ENCODE measurements at regions of chr12 and their contacts with region 1.

Region 1: GRCh38 chr12:98593351-98594049 is at the start of gene SLC25A3:
- DNase-seq: peak; percentile 96
- H3K4me3 Mint-ChIP-seq: peak within 1 kb of the TSS; percentile 84
- H3K27ac Mint-ChIP-seq: peak within 1 kb of the TSS; percentile 96
- H3K4me1 Mint-ChIP-seq: peaks cover 38% of the 10 kb centered on the region
- H3K27me3 Mint-ChIP-seq: no peaks in the 10 kb centered on the region
- total RNA-seq, gene SLC25A3: 333 to 355 TPM

Region 2: GRCh38 chr12:98572010-98572409 is 21.5 kb before region 1 on chr12:
- CTCF ChIA-PET with region 1: interaction called, 10 read pairs
- POLR2A ChIA-PET with region 1: no interaction called
- DNase-seq: no peak
- H3K4me3 Mint-ChIP-seq: no peak overlapping the region
- H3K27ac Mint-ChIP-seq: no peak overlapping the region
- H3K4me1 Mint-ChIP-seq: no peaks in the 10 kb centered on the region
- H3K27me3 Mint-ChIP-seq: no peaks in the 10 kb centered on the region

Region 3: DNA sequence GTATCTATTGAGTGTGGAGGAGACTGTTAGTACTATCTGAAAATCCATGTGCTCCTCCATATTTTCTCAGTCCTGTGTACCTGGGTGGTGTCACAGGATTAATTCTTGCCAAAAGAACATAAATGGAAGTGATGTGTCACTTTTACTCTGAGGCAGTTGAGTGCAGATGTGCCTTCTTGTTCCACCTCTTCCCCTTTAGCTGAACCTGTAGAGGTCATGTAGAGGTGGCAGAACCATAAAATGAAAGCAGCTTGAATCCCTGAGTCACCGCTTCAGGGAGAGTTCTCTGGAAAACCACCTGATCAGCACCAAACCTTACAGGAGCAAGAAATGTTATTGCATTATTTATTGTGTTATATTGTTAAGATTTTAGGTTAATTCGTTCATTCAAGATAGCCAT is 14.7 kb before region 1 on chr12:
- CTCF ChIA-PET with region 1: interaction called, 17 read pairs
- POLR2A ChIA-PET with region 1: no interaction called
- DNase-seq: no peak
- H3K4me3 Mint-ChIP-seq: no peak overlapping the region
- H3K27ac Mint-ChIP-seq: no peak overlapping the region
- H3K4me1 Mint-ChIP-seq: no peaks in the 10 kb centered on the region
- H3K27me3 Mint-ChIP-seq: peaks cover 4% of the 10 kb centered on the region

Region 4: GRCh38 chr12:98618952-98619351 is 25.5 kb after region 1 on chr12:
- CTCF ChIA-PET with region 1: no interaction called
- POLR2A ChIA-PET with region 1: no interaction called
- DNase-seq: no peak
- H3K4me3 Mint-ChIP-seq: no peak overlapping the region
- H3K27ac Mint-ChIP-seq: no peak overlapping the region
- H3K4me1 Mint-ChIP-seq: peaks cover 10% of the 10 kb centered on the region
- H3K27me3 Mint-ChIP-seq: no peaks in the 10 kb centered on the region

Measured in activated CD4-positive, alpha-beta T cell treated with anti-CD3 and anti-CD28 coated beads, Interleukin-2, amount 10 ng/mL, durations not matched to agents 7 days and 5 days (primary cell).